IMR-90 (cell line): ENCODE measurements at regions of chr16 and their contacts with region 1.

Region 1: GRCh38 chr16:46853713-46854443 is 22.9 kb upstream of the C16orf87 start:
- DNase-seq: peak; percentile 69
- ATAC-seq: peak; percentile 93
- H3K4me3 ChIP-seq: no peak overlapping the region
- H3K27ac ChIP-seq: no peak overlapping the region
- H3K4me1 ChIP-seq: no peaks in the 10 kb centered on the region
- H3K27me3 ChIP-seq: peaks cover 2% of the 10 kb centered on the region; the same call in 1 of the 2 replicates
- CTCF ChIP-seq: peak; percentile 97
- POLR2A ChIP-seq: no peak
- RAD21 ChIP-seq: peak; percentile 98

Region 2: DNA sequence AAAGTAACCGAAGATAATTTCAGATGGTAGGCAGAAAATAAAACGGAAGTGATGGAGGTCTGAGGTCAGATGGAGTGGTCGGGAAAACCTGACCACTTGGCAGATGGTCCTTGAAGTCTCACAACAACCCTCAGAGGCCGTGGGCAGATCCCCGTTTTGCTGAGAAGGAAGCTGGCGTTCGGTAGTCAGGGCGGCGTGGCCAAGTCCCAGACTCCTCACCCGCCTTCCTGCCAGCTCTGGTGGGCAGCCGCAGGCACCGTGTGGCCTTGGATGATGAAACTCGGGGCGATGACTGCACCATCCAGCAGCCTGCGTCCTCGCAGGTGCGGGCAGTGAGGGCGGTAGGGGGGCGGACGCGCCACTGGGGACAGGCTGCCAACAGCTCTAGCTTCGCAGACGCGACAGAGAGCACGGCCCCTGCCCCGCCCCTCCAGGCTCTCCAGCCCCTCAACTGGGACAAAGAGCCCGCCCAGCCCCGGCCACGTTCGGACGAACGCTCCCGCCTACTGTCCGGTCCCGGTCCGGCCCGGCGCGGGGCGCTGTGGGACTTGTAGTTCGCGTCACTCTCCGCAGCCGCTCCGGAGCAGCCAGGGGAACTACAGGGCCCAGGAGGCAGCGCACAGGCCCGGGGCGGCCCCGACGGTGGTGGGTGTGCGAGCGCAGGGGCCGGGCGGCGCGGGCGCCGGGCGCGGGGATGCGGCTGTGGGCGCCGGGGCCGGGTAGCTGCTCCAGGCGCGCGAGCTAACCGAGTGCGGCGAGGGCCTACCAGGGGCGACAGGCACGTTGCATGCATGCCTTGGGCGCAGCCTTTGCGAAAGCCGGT is 30.0 kb after region 1 on chr16 and contains the start of gene GPT2:
- CTCF ChIA-PET with region 1: interaction called, 5 read pairs
- POLR2A ChIA-PET with region 1: no interaction called
- dilution Hi-C with region 1: no loop called
- in situ Hi-C with region 1: no loop called
- intact Hi-C with region 1: loop called (anchors 5 kb)
- DNase-seq: peak; percentile 95
- ATAC-seq: peak; percentile 98
- H3K4me3 ChIP-seq: peak within 1 kb of the TSS; percentile 79
- H3K27ac ChIP-seq: peak within 1 kb of the TSS; percentile 61
- H3K4me1 ChIP-seq: peaks cover 13% of the 10 kb centered on the region; the same call in 1 of the 2 replicates
- H3K27me3 ChIP-seq: peaks cover 17% of the 10 kb centered on the region
- CTCF ChIP-seq: no peak; the same call in 1 of the 2 replicates
- POLR2A ChIP-seq: peak; percentile 44
- RAD21 ChIP-seq: no peak
- total RNA-seq, gene GPT2: 20.8 and 31.5 TPM in 2 replicates

Region 3: DNA sequence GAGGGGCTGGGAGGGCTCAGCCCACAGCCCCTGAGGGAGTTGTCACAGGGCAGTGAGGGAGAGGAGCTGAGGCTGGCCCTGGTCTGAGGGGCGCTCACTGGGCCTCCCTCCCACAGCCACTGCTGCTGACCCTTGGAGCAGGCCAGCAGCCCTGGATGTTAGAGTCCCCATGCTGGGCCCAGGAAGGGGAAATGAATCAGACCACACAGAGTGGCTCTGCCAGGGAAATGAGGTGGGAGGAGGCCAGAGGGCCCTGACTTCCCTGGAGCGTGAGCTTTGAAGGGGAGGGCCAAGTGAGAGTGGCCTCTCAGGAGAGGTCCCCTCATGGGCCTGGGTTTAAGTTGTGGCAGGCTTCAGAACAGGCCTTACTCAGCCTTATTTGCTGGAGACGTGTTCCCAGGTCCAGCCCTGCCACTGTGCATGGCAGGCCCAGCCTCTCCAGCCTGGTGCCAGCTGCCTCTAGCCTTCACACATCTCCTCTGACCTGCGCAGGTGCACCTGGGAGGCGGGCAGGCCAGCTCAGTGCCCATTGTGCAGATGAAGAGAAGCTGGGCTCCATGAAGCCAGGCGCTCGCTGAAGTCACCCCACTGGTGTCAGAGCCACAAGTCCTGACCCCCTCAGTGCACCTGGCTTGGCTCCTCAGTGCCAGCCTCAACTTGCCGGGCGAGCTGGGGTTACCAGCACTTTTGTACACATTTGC is 45.7 kb after region 1 on chr16:
- CTCF ChIA-PET with region 1: interaction called, 6 read pairs
- POLR2A ChIA-PET with region 1: no interaction called
- dilution Hi-C with region 1: no loop called
- in situ Hi-C with region 1: loop called (anchors 5 kb)
- intact Hi-C with region 1: no loop called
- DNase-seq: peak; percentile 23
- ATAC-seq: peak; percentile 58
- H3K4me3 ChIP-seq: no peak overlapping the region
- H3K27ac ChIP-seq: no peak overlapping the region
- H3K4me1 ChIP-seq: peaks cover 11% of the 10 kb centered on the region
- H3K27me3 ChIP-seq: no peaks in the 10 kb centered on the region
- CTCF ChIP-seq: no peak
- POLR2A ChIP-seq: no peak
- RAD21 ChIP-seq: no peak

Region 4: GRCh38 chr16:46908540-46909372 is 54.9 kb after region 1 on chr16:
- CTCF ChIA-PET with region 1: interaction called, 16 read pairs
- POLR2A ChIA-PET with region 1: no interaction called
- dilution Hi-C with region 1: no loop called
- in situ Hi-C with region 1: no loop called
- intact Hi-C with region 1: loop called (anchors 1 kb)
- DNase-seq: peak; percentile 61
- ATAC-seq: peak; percentile 87
- H3K4me3 ChIP-seq: no peak overlapping the region
- H3K27ac ChIP-seq: no peak overlapping the region
- H3K4me1 ChIP-seq: no peaks in the 10 kb centered on the region
- H3K27me3 ChIP-seq: no peaks in the 10 kb centered on the region
- CTCF ChIP-seq: peak; percentile 66
- POLR2A ChIP-seq: no peak
- RAD21 ChIP-seq: peak; percentile 69

Region 5: DNA sequence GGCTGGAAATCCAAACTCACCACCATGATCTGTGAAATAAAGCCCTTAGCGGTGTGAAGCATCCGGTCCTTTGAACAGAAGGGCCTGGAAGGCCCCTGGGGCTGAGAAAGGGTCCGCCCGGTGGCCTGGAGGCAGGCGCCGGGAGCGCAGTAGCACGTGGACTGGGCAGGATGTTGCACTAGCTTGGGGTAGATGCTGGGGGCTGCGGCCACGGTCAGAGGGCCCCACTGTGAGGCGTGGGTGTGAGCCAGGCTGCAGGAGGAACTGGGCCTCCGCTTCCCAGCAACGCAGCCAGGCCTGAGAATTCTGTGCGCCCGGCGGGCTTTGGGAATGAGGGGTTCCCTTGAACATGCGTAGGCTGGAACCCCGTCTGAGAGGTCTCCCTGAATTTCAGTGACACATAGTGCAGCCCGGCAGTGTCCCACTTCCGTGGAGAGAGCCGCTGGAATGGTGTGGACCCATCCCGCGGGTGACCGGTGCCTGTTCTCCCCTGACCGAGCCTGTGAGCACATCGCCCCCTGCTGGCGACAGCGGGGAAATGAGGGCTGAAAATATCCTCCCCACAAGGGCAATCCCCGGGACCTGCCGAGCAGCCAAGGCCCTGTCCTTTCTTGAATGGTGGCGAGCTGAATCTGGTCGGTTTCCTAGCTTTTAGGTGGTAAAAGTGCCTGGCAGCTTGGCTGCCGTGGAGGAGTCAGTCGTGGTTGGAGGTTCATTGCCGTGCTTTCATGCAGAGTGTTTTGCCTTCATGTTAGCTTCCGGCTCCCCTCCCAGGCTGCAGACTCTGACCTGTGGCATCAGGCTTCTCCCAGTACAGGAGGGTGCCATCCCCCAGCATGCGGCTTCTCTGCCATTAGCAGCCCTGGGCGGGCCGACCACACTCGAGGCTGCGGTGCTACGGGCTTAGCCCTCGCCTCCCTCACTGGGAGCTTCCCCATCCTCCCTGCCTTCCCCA is 75.8 kb after region 1 on chr16:
- CTCF ChIA-PET with region 1: interaction called, 4 read pairs
- POLR2A ChIA-PET with region 1: no interaction called
- dilution Hi-C with region 1: no loop called
- in situ Hi-C with region 1: no loop called
- intact Hi-C with region 1: loop called (anchors 1 kb)
- DNase-seq: peak; percentile 45
- ATAC-seq: peak; percentile 98
- H3K4me3 ChIP-seq: no peak overlapping the region
- H3K27ac ChIP-seq: no peak overlapping the region
- H3K4me1 ChIP-seq: no peaks in the 10 kb centered on the region
- H3K27me3 ChIP-seq: no peaks in the 10 kb centered on the region
- CTCF ChIP-seq: peak; percentile 79
- POLR2A ChIP-seq: no peak
- RAD21 ChIP-seq: peak; percentile 65